ENCODE measurements at regions of chr15 and their contacts with region 1.

Region 1: GRCh38 chr15:65792130-65792987 is at the start of gene DENND4A:
- DNase-seq: peak; percentile 99
- H3K4me3 ChIP-seq: peak within 1 kb of the TSS; percentile 73 to 94 (median 82)
- H3K27ac ChIP-seq: peak within 1 kb of the TSS; percentile 97 to 99 (median 98)
- H3K4me1 ChIP-seq: peaks cover 0 to 30% (median 19%) of the 10 kb centered on the region in 4 donors
- H3K27me3 ChIP-seq: no peaks in the 10 kb centered on the region
- CTCF ChIP-seq: no peak
- EP300 ChIP-seq: peak in 1 of 4 donors; percentile 44
- POLR2A ChIP-seq: peak; percentile 54 to 81
- total RNA-seq, gene DENND4A: 29.3 to 46.1 (median 43.9) TPM

Region 2: DNA sequence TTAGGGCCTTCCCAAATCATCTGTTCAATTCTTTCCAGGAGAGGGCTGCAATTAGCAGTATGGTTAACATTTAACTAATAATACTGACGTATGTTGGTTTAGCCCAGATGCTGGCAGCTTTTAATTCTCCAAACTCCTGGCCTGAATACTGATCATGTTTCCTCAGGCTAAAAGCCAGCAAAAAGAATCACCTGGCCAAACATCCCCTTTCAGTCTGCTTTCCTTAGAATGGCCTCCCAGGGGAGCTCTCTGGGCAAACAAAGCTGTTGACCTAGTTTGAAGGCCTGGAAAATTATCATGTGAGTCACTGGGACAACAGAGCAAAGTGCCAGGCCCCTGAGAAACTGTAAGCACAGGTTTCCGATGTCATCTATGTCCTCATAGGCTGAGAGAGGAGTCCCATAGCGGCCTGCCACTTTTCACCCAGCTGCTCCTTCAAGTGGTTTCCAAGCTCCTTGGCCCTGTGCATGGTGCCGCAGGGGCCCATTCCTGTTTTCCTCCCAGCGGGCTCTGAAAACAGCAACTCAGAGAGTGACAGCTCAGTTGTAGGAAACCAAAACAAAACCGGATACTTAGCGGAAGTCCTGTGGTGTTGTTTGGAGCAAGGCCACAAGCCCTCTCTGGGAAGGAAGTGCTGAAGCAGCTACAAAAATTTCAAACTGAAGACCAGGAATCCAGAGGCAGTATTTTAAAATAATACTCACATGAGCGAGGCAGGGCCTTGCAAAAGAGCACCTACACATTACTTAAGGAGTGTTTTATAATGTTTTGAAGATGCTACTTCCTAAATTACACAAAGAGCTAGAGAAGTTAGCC is 40.4 kb after region 1 on chr15:
- intact Hi-C with region 1: loop called (anchors 2 kb)
- DNase-seq: peak; percentile 95
- H3K4me3 ChIP-seq: peak overlapping the region in 1 of 4 donors; percentile 25
- H3K27ac ChIP-seq: peak overlapping the region; percentile 73 to 85 (median 79)
- H3K4me1 ChIP-seq: peaks cover 0 to 41% (median 36%) of the 10 kb centered on the region in 4 donors
- H3K27me3 ChIP-seq: no peaks in the 10 kb centered on the region
- CTCF ChIP-seq: no peak
- EP300 ChIP-seq: peak in 1 of 4 donors; percentile 2
- POLR2A ChIP-seq: no peak

Region 3: DNA sequence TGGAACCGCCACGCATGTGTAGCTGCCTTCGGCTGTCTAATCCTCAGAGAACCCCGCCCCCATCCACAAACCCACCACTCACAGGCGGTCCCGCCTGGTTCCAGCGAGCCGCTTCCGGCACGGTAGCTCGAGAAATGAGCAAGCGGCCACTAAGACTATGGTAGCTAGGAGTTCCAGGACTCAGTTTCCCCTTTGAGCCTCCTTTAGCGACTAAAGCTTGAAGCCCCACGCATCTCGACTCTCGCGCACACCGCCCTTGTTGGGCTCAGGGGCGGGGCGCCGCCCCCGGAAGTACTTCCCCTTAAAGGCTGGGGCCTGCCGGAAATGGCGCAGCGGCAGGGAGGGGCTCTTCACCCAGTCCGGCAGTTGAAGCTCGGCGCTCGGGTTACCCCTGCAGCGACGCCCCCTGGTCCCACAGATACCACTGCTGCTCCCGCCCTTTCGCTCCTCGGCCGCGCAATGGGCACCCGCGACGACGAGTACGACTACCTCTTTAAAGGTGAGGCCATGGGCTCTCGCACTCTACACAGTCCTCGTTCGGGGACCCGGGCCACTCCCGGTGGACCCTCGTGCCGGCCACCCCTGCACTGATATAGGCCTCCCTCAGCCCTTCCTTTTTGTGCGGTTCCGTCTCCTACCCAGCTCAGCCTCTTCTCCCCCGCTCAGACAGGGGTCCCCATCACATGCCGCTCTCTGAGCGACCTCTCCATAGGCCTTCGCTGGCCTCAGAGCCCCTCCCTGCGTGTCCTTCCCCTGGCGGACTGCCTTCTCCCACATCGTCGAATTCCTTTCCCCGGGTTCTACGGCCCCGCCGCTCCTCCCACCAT is 77.0 kb after region 1 on chr15 and contains the start of gene RAB11A:
- intact Hi-C with region 1: loop called (anchors 1 kb)
- DNase-seq: peak; percentile 98
- H3K4me3 ChIP-seq: peak within 1 kb of the TSS; percentile 90 to 97 (median 94)
- H3K27ac ChIP-seq: peak within 1 kb of the TSS; percentile 95 to 97 (median 96)
- H3K4me1 ChIP-seq: peaks cover 0 to 12% (median 5%) of the 10 kb centered on the region in 4 donors
- H3K27me3 ChIP-seq: no peaks in the 10 kb centered on the region
- CTCF ChIP-seq: peak in 1 of 4 experiments; percentile 37
- EP300 ChIP-seq: no peak
- POLR2A ChIP-seq: peak; percentile 93 to 96
- total RNA-seq, gene RAB11A: 74.2 to 112 (median 90.3) TPM